Calu3 (cell line): ENCODE measurements at regions of chr1 and their contacts with region 1.

Region 1: DNA sequence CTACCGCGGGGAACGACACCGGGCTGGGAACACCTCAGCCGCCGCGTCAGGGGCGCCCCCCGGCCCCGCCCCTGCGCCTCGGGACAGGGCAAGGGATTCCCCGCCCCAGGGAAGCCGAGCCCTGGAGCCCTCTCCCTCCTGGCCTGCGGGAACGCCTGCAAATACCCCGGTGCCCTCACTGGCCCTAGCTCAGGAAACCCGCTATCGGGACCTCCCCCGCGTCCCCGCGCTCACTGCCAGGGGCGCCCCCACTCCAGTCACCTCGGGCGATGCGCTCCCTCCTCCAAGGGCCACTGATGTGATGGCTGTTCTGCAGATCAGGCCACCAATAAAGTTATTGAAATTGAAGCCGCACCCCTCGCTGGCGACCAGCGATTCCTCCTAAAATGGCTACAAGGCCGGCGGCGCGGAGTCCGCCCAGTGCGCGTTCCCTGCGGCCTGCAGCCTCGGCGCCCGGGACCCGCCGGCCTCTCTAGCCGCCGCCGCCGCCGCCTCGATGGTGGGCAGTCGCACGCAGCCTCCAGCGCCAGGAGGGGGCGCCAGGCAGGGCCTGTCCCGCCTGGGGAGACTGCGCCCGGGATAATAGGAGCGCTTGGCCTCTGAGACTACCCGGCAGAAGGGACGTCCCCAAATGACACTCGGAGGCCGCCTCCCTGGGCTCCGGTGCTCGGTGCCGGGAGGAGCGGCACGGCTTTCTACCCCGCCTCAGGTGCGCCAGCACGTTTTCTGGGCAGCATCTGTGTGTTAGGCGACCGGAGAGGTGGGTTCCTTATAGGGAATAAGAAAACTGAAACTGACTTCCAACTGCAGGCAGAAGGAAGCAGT is at the start of gene PRKAB2:
- DNase-seq: peak; percentile 99
- H3K4me3 Mint-ChIP-seq: peak within 1 kb of the TSS; percentile 100
- H3K27ac Mint-ChIP-seq: peak within 1 kb of the TSS; percentile 99
- H3K4me1 Mint-ChIP-seq: peaks cover 39% of the 10 kb centered on the region
- H3K27me3 Mint-ChIP-seq: no peaks in the 10 kb centered on the region
- CTCF ChIP-seq: peak; percentile 87
- total RNA-seq, gene PRKAB2: 9.8 and 12.6 TPM in 2 replicates

Region 2: DNA sequence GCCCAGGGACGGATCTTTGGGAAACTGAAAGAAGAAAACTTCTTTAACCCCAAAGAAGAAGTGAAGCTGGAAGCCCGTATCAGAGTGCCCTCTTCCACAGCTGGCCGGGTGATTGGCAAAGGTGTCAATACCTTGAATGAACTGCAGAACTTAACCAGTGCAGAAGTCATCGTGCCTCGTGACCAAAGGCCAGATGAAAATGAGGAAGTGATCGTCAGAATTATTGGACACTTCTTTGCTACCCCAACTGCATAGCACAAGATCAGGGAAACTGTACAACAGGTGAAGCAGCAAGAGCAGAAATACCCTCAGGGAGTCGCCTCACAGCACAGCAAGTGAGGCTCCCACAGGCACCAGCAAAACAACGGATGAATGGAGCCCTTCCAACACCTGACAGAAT is 120.2 kb before region 1 on chr1:
- CTCF ChIA-PET with region 1: no interaction called
- intact Hi-C with region 1: no loop called
- DNase-seq: no peak
- H3K4me3 Mint-ChIP-seq: no peak overlapping the region
- H3K27ac Mint-ChIP-seq: no peak overlapping the region
- H3K4me1 Mint-ChIP-seq: no peaks in the 10 kb centered on the region
- H3K27me3 Mint-ChIP-seq: peaks cover 37% of the 10 kb centered on the region
- CTCF ChIP-seq: no peak

Region 3: GRCh38 chr1:147084273-147085096 is 87.9 kb before region 1 on chr1:
- CTCF ChIA-PET with region 1: no interaction called
- intact Hi-C with region 1: loop called (anchors 5 kb)
- DNase-seq: peak; percentile 70
- H3K4me3 Mint-ChIP-seq: peak overlapping the region; percentile 77
- H3K27ac Mint-ChIP-seq: peak overlapping the region; percentile 97
- H3K4me1 Mint-ChIP-seq: peaks cover 12% of the 10 kb centered on the region
- H3K27me3 Mint-ChIP-seq: peaks cover 77% of the 10 kb centered on the region
- CTCF ChIP-seq: no peak

Region 4: GRCh38 chr1:147225193-147225730 is 52.9 kb after region 1 on chr1 and contains the start of gene FMO5:
- CTCF ChIA-PET with region 1: interaction called, 3 read pairs
- intact Hi-C with region 1: loop called (anchors 2 kb)
- DNase-seq: peak; percentile 58
- H3K4me3 Mint-ChIP-seq: peak within 1 kb of the TSS; percentile 91
- H3K27ac Mint-ChIP-seq: peak within 1 kb of the TSS; percentile 47
- H3K4me1 Mint-ChIP-seq: peaks cover 22% of the 10 kb centered on the region
- H3K27me3 Mint-ChIP-seq: peaks cover 14% of the 10 kb centered on the region
- CTCF ChIP-seq: no peak
- total RNA-seq, gene FMO5: 0.61 and 1.0 TPM in 2 replicates

Region 5: GRCh38 chr1:147242439-147243227 is 70.3 kb after region 1 on chr1 and contains the start of gene CHD1L:
- CTCF ChIA-PET with region 1: interaction called, 13 read pairs
- intact Hi-C with region 1: loop called (anchors 1 kb)
- DNase-seq: peak; percentile 97
- H3K4me3 Mint-ChIP-seq: peak within 1 kb of the TSS; percentile 67
- H3K27ac Mint-ChIP-seq: peak within 1 kb of the TSS; percentile 35
- H3K4me1 Mint-ChIP-seq: peaks cover 59% of the 10 kb centered on the region
- H3K27me3 Mint-ChIP-seq: no peaks in the 10 kb centered on the region
- CTCF ChIP-seq: peak; percentile 93
- total RNA-seq, gene CHD1L: 32.6 and 34.2 TPM in 2 replicates

Region 6: DNA sequence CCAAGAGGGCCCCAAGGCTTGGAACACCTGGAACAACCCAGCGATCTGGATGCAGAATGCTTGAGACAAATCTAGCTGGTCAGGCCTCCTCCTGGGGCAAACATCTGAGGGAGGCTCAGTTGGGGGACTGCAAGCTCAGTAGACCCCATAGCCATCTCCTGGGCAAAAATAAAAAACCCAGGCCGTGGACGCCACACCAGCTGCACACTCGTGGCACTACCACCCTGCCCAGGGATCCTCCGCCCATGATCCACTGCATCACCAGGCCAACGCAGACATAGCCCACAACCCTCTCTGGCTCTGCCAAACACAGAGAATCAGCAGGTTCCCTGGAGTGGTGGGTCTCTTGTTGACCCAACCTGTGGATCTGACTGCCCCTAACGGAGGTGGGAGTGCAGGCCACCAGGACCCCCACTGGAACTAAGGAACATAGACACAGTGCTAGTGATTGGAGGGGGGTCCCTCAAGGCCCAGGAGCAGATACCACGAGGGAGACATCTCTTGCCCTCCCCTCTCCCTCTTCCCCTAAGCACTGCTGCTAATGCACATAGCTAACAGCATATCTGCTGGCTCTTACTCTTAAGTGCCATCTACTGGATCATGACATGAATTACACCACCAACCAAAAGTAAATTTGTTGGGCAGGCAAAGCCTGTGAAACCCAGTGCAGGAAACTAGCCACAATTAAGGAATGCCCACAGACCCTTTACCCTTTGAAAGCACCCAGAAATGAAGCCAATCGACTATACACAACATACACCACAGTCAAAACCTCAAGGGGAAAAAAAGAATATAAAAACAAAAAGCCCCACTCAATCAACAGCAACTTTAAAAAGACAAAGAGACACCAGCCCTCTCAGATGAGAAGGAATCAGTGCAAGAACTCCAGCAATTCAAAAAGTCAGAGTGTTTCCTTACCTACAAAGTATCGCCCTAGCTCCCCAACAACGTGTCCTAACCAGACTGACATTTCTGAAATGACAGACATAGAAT is 217.4 kb after region 1 on chr1:
- CTCF ChIA-PET with region 1: no interaction called
- intact Hi-C with region 1: loop called (anchors 5 kb)
- DNase-seq: peak; percentile 32
- H3K4me3 Mint-ChIP-seq: no peak overlapping the region
- H3K27ac Mint-ChIP-seq: no peak overlapping the region
- H3K4me1 Mint-ChIP-seq: no peaks in the 10 kb centered on the region
- H3K27me3 Mint-ChIP-seq: peaks cover 14% of the 10 kb centered on the region
- CTCF ChIP-seq: peak; percentile 68